ENCODE measurements at regions of chr5 and their contacts with region 1.

Region 1: DNA sequence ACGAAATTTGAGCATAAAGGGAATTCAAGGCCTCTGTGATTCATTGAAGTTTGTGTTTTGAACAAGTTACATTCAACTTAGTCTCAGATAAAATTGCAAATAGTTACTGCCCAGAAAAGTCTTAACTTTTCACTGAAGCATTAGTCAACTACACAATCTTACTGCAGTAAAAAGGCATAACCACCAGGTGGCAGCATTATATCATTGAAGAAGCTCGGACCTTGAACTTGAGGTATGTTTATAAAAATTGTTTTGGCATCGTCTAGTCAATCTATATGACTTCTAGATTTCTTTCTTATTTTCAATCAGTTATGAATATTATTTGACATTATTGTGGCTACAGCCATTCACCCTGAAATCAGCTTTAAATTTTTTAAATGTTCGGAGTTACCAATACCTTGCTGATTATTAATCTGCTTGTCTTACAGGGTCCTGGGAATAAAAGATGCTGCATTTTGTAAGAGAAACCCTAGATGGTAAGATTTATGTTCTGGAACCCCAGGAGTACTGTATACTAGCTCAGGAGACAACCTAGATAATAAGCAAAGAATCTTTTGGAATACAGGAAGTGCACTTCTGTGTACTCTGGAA is 83.9 kb upstream of the GRAMD2B start:
- DNase-seq: peak; percentile 68
- ATAC-seq: no peak
- H3K4me3 ChIP-seq: no peak overlapping the region
- H3K4me3 Mint-ChIP-seq: no peak overlapping the region
- H3K27ac ChIP-seq: no peak overlapping the region
- H3K27ac Mint-ChIP-seq: no peak overlapping the region
- H3K4me1 ChIP-seq: no peaks in the 10 kb centered on the region
- H3K4me1 Mint-ChIP-seq: no peaks in the 10 kb centered on the region
- H3K27me3 ChIP-seq: peaks cover 0 to 7% (median 4%) of the 10 kb centered on the region in 4 experiments
- H3K27me3 Mint-ChIP-seq: peaks cover 9% of the 10 kb centered on the region
- CTCF ChIP-seq: peak; percentile 96

Region 2: DNA sequence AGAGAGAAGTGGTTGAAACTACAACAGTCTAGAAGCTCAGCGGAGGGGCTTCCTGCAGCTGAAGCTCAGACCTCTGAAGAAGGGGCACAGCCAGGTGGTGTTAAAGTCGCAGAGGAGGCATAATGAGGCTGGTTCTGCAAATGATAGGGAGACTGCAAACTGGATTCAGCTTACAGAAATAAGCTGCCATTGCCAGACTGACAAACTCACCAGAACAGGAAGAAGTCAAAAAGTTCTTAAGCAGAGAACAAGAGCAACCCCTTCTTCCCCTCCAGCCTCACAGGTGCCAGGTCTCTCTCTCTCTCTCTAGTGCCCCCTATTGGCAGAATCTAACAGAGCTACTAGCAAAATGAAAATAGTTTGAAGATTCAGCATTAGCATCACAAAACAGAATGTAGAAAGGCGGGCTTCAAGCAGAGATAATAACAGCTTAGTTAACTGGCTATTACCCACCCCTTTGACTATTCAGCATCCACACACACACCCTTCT is 160.6 kb after region 1 on chr5:
- CTCF ChIA-PET with region 1: interaction called, 15 read pairs
- POLR2A ChIA-PET with region 1: no interaction called
- intact Hi-C with region 1: no loop called
- DNase-seq: peak; percentile 32
- ATAC-seq: no peak
- H3K4me3 ChIP-seq: no peak overlapping the region
- H3K4me3 Mint-ChIP-seq: no peak overlapping the region
- H3K27ac ChIP-seq: no peak overlapping the region
- H3K27ac Mint-ChIP-seq: no peak overlapping the region
- H3K4me1 ChIP-seq: no peaks in the 10 kb centered on the region
- H3K4me1 Mint-ChIP-seq: no peaks in the 10 kb centered on the region
- H3K27me3 ChIP-seq: no peaks in the 10 kb centered on the region
- H3K27me3 Mint-ChIP-seq: peaks cover 3% of the 10 kb centered on the region
- CTCF ChIP-seq: peak; percentile 41

Region 3: GRCh38 chr5:126544087-126544740 is 204.9 kb after region 1 on chr5:
- CTCF ChIA-PET with region 1: interaction called, 93 read pairs
- POLR2A ChIA-PET with region 1: no interaction called
- intact Hi-C with region 1: no loop called
- DNase-seq: peak; percentile 30
- ATAC-seq: no peak
- H3K4me3 ChIP-seq: no peak overlapping the region
- H3K4me3 Mint-ChIP-seq: no peak overlapping the region
- H3K27ac ChIP-seq: no peak overlapping the region
- H3K27ac Mint-ChIP-seq: no peak overlapping the region
- H3K4me1 ChIP-seq: no peaks in the 10 kb centered on the region
- H3K4me1 Mint-ChIP-seq: no peaks in the 10 kb centered on the region
- H3K27me3 ChIP-seq: no peaks in the 10 kb centered on the region
- H3K27me3 Mint-ChIP-seq: no peaks in the 10 kb centered on the region
- CTCF ChIP-seq: peak; percentile 47

Region 4: GRCh38 chr5:126801992-126802294 is 462.6 kb after region 1 on chr5:
- CTCF ChIA-PET with region 1: no interaction called
- POLR2A ChIA-PET with region 1: no interaction called
- intact Hi-C with region 1: loop called (anchors 5 kb)
- DNase-seq: peak; percentile 48
- ATAC-seq: no peak
- H3K4me3 ChIP-seq: no peak overlapping the region
- H3K4me3 Mint-ChIP-seq: no peak overlapping the region
- H3K27ac ChIP-seq: no peak overlapping the region
- H3K27ac Mint-ChIP-seq: no peak overlapping the region
- H3K4me1 ChIP-seq: peaks cover 0 to 3% of the 10 kb centered on the region in 2 donors
- H3K4me1 Mint-ChIP-seq: peaks cover 34% of the 10 kb centered on the region
- H3K27me3 ChIP-seq: no peaks in the 10 kb centered on the region
- H3K27me3 Mint-ChIP-seq: no peaks in the 10 kb centered on the region
- CTCF ChIP-seq: peak; percentile 69